Sigmoid colon (tissue), 7 donors: ENCODE measurements at regions of chr2 and their contacts with region 1.

Region 1: DNA sequence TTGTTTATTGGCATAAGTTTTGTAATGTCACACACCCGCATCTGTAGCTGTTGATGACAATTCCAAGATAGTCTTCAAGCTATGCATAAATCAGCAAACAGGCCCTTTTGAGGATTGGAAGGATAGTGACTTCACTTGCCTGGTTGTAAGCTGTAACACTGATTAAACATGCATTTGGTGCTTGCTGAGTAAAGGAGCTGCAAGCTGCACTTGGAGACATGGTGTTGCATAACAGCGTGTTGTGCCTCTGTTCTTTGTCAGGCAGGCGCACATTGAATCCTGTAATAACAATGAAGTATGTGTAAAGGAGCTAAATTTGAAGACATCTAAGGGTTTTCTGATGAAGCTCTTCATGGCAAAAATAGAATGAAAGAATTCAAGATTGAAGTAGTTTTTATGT is 68.7 kb upstream of the TTC27 start:
- DNase-seq: peak; percentile 72
- H3K4me3 ChIP-seq: no peak overlapping the region
- H3K27ac ChIP-seq: peak overlapping the region in 3 of 4 donors; percentile 49 to 61 (median 52)
- H3K4me1 ChIP-seq: peaks cover 0 to 23% (median 14%) of the 10 kb centered on the region in 4 donors
- H3K27me3 ChIP-seq: no peaks in the 10 kb centered on the region
- CTCF ChIP-seq: no peak
- EP300 ChIP-seq: no peak
- POLR2A ChIP-seq: no peak

Region 2: DNA sequence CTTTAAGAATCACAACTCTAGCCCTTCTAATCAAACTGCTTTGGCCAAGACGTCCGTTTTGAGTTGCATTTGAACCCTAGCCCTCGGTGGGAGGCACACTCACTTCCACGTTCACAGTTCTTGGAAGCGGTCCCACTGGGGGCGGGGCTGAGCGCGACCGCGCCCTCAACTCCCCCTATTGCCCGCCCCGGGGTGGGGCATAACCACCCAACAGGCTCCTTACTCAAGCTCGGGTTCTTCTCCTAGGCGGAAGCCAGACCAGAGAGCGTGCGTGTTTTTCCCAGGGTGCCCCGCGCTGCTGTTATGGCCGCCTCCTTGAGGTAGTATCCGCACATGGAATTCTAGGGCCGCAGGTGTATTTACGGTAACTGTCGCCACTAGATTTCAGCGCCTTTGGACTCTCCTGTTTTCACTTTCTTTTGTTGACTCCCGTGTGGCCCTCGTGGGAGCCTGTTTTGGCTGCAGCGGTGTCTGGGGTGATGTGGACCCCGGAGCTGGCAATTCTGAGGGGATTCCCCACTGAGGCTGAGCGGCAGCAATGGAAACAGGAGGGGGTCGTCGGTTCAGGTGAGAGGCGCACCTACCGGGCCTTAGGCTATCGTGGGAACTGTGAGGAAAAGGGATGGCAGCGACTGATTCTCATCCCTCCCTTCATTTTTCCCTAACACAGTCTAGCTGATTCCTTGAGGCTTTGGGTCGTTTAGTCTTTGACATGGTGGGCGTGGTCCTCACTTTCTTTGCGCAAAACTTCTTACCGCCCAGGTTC is 68.9 kb after region 1 on chr2 and contains the start of gene TTC27:
- intact Hi-C with region 1: loop called (anchors 5 kb)
- DNase-seq: peak; percentile 97
- H3K4me3 ChIP-seq: peak within 1 kb of the TSS; percentile 53 to 85 (median 68)
- H3K27ac ChIP-seq: peak within 1 kb of the TSS; percentile 71 to 85 (median 80)
- H3K4me1 ChIP-seq: peaks cover 0 to 29% (median 22%) of the 10 kb centered on the region in 4 donors
- H3K27me3 ChIP-seq: no peaks in the 10 kb centered on the region
- CTCF ChIP-seq: peak in 1 of 4 experiments; percentile 1
- EP300 ChIP-seq: peak in 1 of 4 donors; percentile 18
- POLR2A ChIP-seq: no peak
- total RNA-seq, gene TTC27: 14.1 to 22.5 (median 14.5) TPM